Left ventricle myocardium superior (tissue), 1 donor: ENCODE measurements at regions of chr1 and their contacts with region 1.

Region 1: DNA sequence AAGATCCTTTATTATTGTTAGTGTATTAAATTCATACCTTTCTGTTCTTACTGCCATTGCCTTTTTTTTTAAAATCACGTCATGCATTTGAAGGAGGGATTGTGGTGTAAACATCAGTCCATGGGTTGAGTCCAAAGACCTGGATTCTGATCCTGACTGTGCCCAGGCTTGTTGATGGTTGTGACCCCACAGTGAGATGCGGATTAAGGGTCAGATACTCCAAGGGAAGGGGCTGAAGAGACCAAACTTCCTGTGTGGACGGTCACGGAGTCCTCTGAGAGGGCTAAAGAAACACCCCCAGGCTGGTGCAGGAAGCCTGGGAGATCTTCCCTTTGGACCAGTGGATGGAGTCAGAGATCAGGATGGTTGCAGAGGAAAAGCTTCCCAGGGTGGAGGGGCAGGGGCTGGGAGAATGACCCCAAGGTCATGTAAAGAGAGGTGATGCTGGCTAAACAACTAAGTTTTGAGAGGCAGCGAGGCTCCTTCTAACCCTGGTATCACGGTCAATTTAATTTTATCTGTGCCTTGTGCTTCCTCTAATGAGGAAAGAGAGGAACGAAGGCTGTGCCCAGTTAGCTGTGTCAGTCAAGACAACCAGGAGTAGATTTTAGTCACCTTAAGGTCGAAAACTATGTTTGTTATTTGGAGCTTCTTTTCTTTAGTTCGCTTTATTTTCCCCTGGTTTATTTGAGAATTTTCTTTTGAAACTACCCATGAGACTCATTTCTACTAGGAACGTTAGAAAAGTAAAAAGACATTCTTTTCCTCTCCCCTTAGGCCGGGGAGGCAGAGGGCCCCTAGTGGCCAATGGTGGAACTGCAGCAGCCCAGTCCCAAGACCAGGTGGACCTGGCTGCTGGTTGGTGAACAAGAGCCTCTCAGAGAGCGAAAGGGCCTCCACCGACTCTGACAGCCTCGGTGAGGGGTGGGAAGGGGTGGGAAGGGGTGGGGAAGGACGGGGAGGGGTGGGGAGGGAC is 8.7 kb upstream of the GPR161 start:
- DNase-seq: peak; percentile 90
- ATAC-seq: peak; percentile 94

Region 2: DNA sequence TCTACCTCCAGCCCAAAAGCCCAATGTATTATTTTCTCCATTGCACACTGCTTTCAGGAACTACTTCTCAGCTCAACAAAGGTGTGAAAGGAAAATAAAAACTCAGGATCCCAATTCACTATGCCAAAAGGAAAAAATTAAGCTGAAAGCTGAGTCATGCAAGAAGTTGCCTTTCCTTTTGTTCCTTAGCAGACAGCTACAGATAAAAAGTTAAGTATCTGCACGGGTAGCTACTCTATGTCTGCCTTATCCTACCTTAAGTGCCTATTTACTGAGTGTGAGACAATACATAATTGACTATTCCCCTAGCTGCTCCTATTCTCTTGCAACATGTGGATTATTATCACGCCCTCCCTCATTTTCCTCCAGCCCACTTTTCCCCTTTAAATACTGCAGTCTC is 315.6 kb before region 1 on chr1:
- intact Hi-C with region 1: no loop called
- DNase-seq: no peak
- ATAC-seq: no peak

Region 3: DNA sequence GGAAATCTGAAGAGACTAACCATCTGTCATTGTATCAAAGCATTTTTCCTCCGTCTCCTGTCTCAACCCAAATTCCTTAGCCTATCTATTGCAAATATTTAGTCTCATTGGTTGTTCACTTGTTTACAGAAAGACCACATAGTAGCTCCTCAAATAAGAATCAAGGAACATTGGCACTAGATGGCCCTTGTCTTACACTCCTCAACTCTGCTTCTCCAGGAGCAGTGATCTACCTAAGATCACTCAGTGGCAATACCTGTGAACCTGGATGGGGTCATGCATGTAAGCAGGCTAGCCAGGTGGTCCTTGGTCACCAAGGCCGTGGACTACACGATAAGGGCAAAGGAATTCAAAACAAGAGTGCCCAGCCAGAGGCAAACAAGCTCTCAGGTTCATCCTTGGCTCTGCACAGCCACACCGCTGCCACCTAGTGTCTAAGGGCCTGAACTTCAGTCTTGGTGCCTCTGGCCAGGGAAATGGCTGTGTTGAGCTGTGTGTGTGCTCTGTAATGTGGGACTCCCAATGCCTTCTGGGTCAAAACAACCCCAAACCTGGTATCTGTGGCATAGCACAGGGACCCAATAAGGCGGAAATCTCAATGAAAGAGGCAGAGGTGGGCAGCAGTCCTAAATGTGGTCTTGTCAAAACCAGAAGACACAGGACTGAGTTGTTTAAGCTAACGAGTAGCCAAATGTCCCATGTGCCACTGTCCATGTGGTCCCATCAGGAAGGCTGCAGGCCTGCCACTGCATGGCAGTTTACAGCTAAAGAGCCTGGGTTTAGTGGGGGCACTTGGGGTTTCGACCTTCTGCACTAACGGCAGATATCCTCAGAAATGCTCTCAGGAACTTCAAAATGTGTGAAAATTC is 63.2 kb before region 1 on chr1:
- intact Hi-C with region 1: loop called (anchors 10 kb)
- DNase-seq: peak; percentile 73
- ATAC-seq: peak; percentile 62